ENCODE measurements at regions of chr11 and their contacts with region 1.

Region 1: GRCh38 chr11:22466809-22467208 is 128.6 kb downstream of the SLC17A6 start:
- DNase-seq: peak; percentile 13
- ATAC-seq: peak; percentile 54; the same call in 1 of the 2 replicates
- H3K4me3 ChIP-seq: no peak overlapping the region
- H3K27ac ChIP-seq: no peak overlapping the region
- H3K4me1 ChIP-seq: peaks cover 0 to 6% of the 10 kb centered on the region in 2 experiments; a peak in 2 of 4 replicates
- H3K27me3 ChIP-seq: no peaks in the 10 kb centered on the region
- CTCF ChIP-seq: no peak
- POLR2A ChIP-seq: no peak
- RAD21 ChIP-seq: no peak

Region 2: GRCh38 chr11:22454461-22455090 is 12.2 kb before region 1 on chr11:
- CTCF ChIA-PET with region 1: no interaction called
- POLR2A ChIA-PET with region 1: no interaction called
- RAD21 ChIA-PET with region 1: no interaction called
- intact Hi-C with region 1: no loop called
- DNase-seq: no peak
- ATAC-seq: no peak
- H3K4me3 ChIP-seq: no peak overlapping the region
- H3K27ac ChIP-seq: no peak overlapping the region
- H3K4me1 ChIP-seq: no peaks in the 10 kb centered on the region
- H3K27me3 ChIP-seq: no peaks in the 10 kb centered on the region
- CTCF ChIP-seq: no peak
- POLR2A ChIP-seq: no peak
- RAD21 ChIP-seq: no peak

Region 3: DNA sequence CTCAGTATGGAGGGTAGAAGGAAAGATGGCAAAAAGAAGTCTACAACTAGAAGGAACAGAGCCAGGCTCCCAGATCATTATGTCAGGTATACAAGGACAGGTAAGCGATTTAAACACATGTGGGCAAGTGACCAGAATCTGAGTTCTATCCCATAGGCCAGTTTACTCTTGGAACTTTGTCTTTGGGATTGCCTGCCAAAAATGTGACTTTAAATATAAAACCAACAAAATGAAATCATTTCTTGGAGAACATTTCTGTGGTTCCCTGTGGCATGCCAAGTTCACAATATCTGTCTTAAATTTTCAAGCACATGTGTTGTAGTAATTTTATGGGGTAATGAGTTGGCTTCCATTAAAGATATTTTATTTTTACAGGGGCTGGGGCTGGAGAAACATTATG is 12.4 kb after region 1 on chr11:
- CTCF ChIA-PET with region 1: no interaction called
- POLR2A ChIA-PET with region 1: no interaction called
- RAD21 ChIA-PET with region 1: no interaction called
- intact Hi-C with region 1: no loop called
- DNase-seq: no peak
- ATAC-seq: no peak
- H3K4me3 ChIP-seq: no peak overlapping the region
- H3K27ac ChIP-seq: no peak overlapping the region
- H3K4me1 ChIP-seq: no peaks in the 10 kb centered on the region
- H3K27me3 ChIP-seq: 0 out of 2 replicates have a peak, but pooled peaks cover 3% of the 10 kb centered on the region
- CTCF ChIP-seq: no peak
- POLR2A ChIP-seq: no peak
- RAD21 ChIP-seq: no peak

Region 4: DNA sequence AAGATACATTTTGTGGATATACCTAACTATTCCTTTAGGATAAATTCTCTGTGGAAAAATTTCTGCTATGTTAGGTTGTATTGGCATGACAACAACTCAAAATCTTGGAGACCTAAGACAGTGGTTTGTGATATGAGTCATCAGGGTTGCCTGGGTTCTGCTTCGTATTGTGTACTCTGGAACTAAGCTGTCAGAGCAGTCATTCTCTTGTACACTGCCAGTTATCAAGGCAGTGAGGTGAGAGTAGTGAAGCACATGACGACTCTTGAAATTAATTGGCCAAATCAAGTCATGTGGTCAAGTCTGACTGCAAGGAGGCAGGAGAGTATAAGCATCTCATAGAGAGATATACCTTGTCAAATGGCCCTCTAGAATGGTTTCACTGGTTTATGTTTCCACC is 54.4 kb after region 1 on chr11:
- CTCF ChIA-PET with region 1: no interaction called
- POLR2A ChIA-PET with region 1: no interaction called
- RAD21 ChIA-PET with region 1: no interaction called
- intact Hi-C with region 1: loop called (anchors 10 kb)
- DNase-seq: peak; percentile 6
- ATAC-seq: no peak
- H3K4me3 ChIP-seq: no peak overlapping the region
- H3K27ac ChIP-seq: no peak overlapping the region
- H3K4me1 ChIP-seq: no peaks in the 10 kb centered on the region
- H3K27me3 ChIP-seq: no peaks in the 10 kb centered on the region
- CTCF ChIP-seq: no peak
- POLR2A ChIP-seq: no peak
- RAD21 ChIP-seq: no peak